ENCODE measurements at regions of chr3 and their contacts with region 1.

Region 1: DNA sequence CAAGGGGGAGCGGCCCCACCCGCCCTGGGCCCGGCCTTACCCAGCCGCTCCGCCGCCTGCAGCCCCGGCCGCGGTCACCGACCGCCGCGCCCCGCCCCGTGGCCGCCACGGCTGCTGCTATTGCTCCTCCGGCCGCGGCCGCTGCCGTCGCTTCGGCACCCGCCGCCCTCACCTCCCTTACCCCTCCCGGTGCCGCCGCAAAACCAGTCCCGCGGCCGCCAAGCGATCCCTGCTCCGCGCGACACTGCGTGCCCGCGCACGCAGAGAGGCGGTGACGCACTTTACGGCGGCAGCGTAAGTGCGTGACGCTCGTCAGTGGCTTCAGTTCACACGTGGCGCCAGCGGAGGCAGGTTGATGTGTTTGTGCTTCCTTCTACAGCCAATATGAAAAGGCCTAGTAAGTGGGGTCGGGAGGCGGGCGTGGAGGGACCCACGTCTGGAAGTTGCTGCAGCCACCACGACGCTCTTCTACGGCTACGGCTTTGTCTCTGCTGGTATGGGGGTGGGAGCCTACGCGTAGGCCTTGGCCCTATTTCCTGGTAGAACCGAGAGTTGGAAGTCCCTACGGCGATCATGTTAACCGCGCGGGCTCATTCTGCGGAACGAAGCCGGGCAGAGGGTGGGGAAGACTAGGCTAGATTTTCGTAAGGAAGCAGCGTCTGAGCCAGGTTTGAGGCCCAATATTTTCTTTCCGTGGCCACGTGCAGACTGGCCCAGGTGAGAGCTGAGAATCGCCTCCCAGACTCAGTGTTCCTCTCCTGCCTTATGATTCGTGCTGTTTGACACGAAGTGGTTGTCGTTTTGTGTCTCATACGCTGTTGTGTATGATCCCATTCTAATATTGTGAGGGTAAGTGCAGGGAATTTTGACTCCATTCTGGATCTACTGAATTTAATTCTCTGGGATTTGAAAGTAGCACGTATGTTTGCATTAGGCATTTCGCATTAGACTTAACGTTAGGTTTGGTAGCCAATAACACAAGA is at the starts of genes GNL3 and PBRM1:
- DNase-seq: peak; percentile 85 to 95 (median 89)
- ATAC-seq: peak; percentile 71
- H3K4me3 ChIP-seq: peak within 1 kb of the TSS; percentile 52
- H3K27ac ChIP-seq: peak within 1 kb of the TSS; percentile 75
- H3K4me1 ChIP-seq: peaks cover 3 to 22% of the 10 kb centered on the region in 2 experiments; a peak in 3 of 5 replicates
- H3K27me3 ChIP-seq: no peaks in the 10 kb centered on the region
- CTCF ChIP-seq: no peak
- EP300 ChIP-seq: no peak
- POLR2A ChIP-seq: peak; percentile 92
- RAD21 ChIP-seq: no peak
- polyA plus RNA-seq, gene GNL3: 220 to 313 TPM
- polyA plus RNA-seq, gene PBRM1: 3.9 to 7.0 TPM

Region 2: DNA sequence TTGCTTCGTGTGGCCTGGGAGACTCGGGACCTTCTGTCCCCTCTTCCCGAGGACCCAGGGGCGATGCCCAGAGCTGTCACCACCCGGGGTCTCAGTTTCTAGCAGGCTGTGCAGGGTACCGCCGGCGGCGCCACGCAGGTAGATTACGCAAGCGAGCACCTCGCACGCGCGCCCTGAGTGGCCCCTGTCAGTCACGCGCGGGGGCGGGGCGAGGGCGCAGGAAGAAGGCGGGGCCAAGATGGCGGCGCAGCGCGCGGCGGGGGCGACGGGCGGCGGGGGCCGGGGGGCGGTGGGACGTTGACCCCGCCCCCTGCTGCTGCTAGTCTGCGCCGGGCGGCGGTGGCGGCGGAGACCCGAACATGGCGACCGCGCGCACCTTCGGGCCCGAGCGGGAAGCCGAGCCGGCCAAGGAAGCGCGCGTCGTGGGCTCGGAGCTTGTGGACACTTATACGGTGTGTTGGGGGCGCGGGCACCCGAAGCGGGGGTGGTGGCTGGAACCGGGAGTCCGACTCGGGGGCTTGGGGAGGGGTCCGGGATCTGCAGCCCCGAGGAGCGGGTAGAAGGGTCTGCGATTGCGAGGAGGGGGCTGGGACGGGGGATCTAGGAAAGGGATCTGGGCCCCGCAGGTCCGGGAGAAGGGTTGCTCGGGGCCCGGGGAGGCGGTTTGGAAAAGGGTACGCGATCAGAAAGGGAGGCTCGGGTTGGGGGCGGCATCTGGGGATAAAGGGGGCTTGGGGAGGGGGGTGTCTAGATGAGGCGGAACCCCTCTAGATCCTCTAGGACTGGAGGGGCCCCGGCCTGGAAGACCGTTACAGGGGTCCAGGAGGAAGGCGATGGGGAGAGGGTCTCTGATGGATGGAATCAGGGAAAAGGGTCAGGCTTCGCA is 230.5 kb before region 1 on chr3 and contains the start of gene NISCH:
- CTCF ChIA-PET with region 1: no interaction called
- POLR2A ChIA-PET with region 1: no interaction called
- in situ Hi-C with region 1: no loop called
- intact Hi-C with region 1: loop called (anchors 10 kb)
- DNase-seq: peak; percentile 88 to 93 (median 93)
- ATAC-seq: peak; percentile 85
- H3K4me3 ChIP-seq: peak within 1 kb of the TSS; percentile 92
- H3K27ac ChIP-seq: peak within 1 kb of the TSS; percentile 73
- H3K4me1 ChIP-seq: peaks cover 19 to 42% of the 10 kb centered on the region in 2 experiments; a peak in 4 of 5 replicates
- H3K27me3 ChIP-seq: no peaks in the 10 kb centered on the region
- CTCF ChIP-seq: no peak
- EP300 ChIP-seq: no peak
- POLR2A ChIP-seq: peak; percentile 81
- RAD21 ChIP-seq: no peak
- polyA plus RNA-seq, gene NISCH: 0.44 to 0.80 TPM

Region 3: GRCh38 chr3:52481819-52482521 is 204.0 kb before region 1 on chr3:
- CTCF ChIA-PET with region 1: interaction called, 6 read pairs
- POLR2A ChIA-PET with region 1: no interaction called
- in situ Hi-C with region 1: no loop called
- intact Hi-C with region 1: loop called (anchors 5 kb)
- DNase-seq: peak; percentile 60 to 74 (median 65)
- ATAC-seq: peak; percentile 88
- H3K4me3 ChIP-seq: no peak overlapping the region
- H3K27ac ChIP-seq: no peak overlapping the region
- H3K4me1 ChIP-seq: peaks cover 0 to 10% of the 10 kb centered on the region in 2 experiments; a peak in 2 of 5 replicates
- H3K27me3 ChIP-seq: no peaks in the 10 kb centered on the region
- CTCF ChIP-seq: peak; percentile 62 to 82 (median 64)
- EP300 ChIP-seq: no peak
- POLR2A ChIP-seq: no peak
- RAD21 ChIP-seq: peak in 1 of 2 experiments; percentile 33; a peak in 1 of 4 replicates

Region 4: DNA sequence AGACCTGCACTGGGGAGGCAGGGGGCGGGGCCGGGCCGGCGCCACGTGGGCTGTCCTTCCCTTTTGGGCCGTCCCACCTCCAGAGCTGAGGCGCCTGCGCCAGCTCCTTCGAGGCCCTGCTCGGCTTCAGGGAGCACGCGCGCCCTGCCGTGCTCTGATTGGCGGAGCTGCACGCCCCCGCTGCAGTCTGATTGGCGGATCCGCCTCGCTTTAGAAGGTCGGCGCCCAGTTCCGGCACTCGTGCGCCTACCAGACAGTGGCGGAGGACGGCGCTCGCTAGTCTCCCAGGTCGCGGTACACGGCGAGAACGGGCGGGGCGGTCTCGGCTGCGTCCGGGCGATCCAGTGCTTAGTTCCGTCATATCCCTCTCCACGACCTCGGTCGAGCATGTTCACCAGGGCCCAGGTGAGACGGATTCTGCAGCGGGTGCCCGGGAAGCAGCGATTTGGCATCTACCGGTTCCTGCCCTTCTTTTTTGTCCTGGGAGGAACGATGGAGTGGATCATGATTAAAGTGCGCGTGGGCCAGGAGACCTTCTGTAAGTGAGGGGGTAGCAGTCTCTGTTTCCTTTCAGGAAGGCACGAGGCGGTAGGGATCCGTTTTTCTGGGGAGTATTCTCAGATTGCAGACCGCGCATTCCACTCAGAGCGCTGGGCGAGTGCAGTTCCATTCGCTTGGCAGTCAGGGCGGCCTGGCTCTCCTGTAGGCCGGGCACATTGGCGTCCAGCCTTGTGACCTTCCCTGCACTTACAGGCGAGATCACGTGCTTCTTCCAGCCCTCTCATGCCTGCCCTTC is 149.4 kb before region 1 on chr3 and contains the start of gene UQCC5:
- CTCF ChIA-PET with region 1: no interaction called
- POLR2A ChIA-PET with region 1: interaction called, 6 read pairs
- in situ Hi-C with region 1: no loop called
- intact Hi-C with region 1: loop called (anchors 2 kb)
- DNase-seq: peak; percentile 87 to 97 (median 92)
- ATAC-seq: peak; percentile 89
- H3K4me3 ChIP-seq: peak within 1 kb of the TSS; percentile 91
- H3K27ac ChIP-seq: peak within 1 kb of the TSS; percentile 91
- H3K4me1 ChIP-seq: peaks cover 34 to 45% of the 10 kb centered on the region in 2 experiments
- H3K27me3 ChIP-seq: no peaks in the 10 kb centered on the region
- CTCF ChIP-seq: peak in 2 of 3 experiments; percentile 17 to 22; a peak in 3 of 6 replicates
- EP300 ChIP-seq: 0 out of 2 replicates have a peak, but pooled peaks have one; percentile 10
- POLR2A ChIP-seq: peak; percentile 91
- RAD21 ChIP-seq: peak in 1 of 2 experiments; percentile 13; a peak in 1 of 4 replicates
- polyA plus RNA-seq, gene UQCC5: 36.3 to 36.7 TPM